ENCODE measurements at regions of chr6 and their contacts with region 1.

Region 1: GRCh38 chr6:1609648-1610496 is at the start of gene FOXC1:
- DNase-seq: peak; percentile 81 to 96
- H3K4me3 ChIP-seq: peak within 1 kb of the TSS; percentile 89
- H3K27ac ChIP-seq: peak within 1 kb of the TSS; percentile 54
- H3K4me1 ChIP-seq: no peaks in the 10 kb centered on the region; the same call in 1 of the 2 replicates
- H3K27me3 ChIP-seq: no peaks in the 10 kb centered on the region
- CTCF ChIP-seq: no peak
- total RNA-seq, gene FOXC1: 16.2 and 18.6 TPM in 2 replicates

Region 2: DNA sequence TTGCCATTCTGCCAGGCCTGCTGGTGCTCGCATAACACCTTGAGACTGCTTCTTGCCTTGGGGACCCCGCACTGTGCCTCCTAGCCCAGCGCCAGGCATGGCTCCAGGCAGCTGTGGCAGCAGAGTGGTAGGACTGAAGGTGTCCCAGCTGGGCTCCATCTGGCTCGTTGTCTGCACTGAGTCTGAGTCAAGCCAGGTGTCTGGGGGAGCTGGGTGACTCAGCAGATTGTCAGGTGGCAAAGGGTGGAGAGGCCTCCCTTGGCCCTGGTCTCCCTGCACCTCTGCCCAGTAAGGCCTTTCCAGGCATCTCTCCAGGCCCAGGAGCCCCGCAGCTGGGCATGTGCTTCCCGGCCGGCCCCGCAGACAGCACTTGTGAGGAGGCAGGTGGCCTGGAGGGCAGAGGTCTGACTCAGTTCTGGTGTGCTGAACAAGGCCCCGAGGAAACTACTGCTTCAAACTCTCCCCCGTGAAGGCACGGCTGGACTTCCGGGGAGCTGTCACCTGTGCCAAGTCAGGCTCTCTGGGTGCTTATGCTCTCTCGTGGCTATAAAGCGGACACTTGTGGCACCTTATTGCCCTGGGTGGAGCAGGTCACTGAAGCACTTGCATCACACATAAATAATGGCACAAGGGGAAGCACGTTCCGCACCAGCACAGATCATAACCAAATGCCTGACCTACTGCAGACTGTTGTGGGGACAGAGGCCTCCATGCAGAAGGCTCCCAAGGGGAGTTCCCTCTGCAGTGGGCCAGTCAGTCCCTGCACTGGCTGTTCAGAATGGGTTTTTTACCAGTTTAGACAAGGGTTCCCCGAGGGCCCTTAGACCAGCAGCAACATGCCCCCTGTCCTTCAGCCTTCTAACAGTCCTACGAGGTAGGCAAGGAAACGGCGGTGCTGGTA is 27.3 kb after region 1 on chr6:
- CTCF ChIA-PET with region 1: no interaction called
- POLR2A ChIA-PET with region 1: no interaction called
- intact Hi-C with region 1: loop called (anchors 2 kb)
- DNase-seq: peak; percentile 89 to 90
- H3K4me3 ChIP-seq: no peak overlapping the region
- H3K27ac ChIP-seq: peak overlapping the region; percentile 76
- H3K4me1 ChIP-seq: peaks cover 55% of the 10 kb centered on the region
- H3K27me3 ChIP-seq: no peaks in the 10 kb centered on the region
- CTCF ChIP-seq: no peak

Region 3: GRCh38 chr6:1670702-1671462 is 61.0 kb after region 1 on chr6:
- CTCF ChIA-PET with region 1: no interaction called
- POLR2A ChIA-PET with region 1: no interaction called
- intact Hi-C with region 1: loop called (anchors 2 kb)
- DNase-seq: peak; percentile 69 to 88
- H3K4me3 ChIP-seq: no peak overlapping the region
- H3K27ac ChIP-seq: peak overlapping the region; percentile 73
- H3K4me1 ChIP-seq: peaks cover 16% of the 10 kb centered on the region
- H3K27me3 ChIP-seq: no peaks in the 10 kb centered on the region
- CTCF ChIP-seq: no peak

Region 4: GRCh38 chr6:1761477-1761877 is 151.6 kb after region 1 on chr6:
- CTCF ChIA-PET with region 1: no interaction called
- POLR2A ChIA-PET with region 1: interaction called, 10 read pairs
- intact Hi-C with region 1: loop called (anchors 5 kb)
- DNase-seq: no peak
- H3K4me3 ChIP-seq: no peak overlapping the region
- H3K27ac ChIP-seq: no peak overlapping the region
- H3K4me1 ChIP-seq: peaks cover 26% of the 10 kb centered on the region
- H3K27me3 ChIP-seq: no peaks in the 10 kb centered on the region
- CTCF ChIP-seq: no peak

Region 5: GRCh38 chr6:1767481-1768251 is 157.8 kb after region 1 on chr6:
- CTCF ChIA-PET with region 1: interaction called, 5 read pairs
- POLR2A ChIA-PET with region 1: interaction called, 4 read pairs
- intact Hi-C with region 1: loop called (anchors 5 kb)
- DNase-seq: peak; percentile 47 to 81
- H3K4me3 ChIP-seq: peak overlapping the region; percentile 43
- H3K27ac ChIP-seq: peak overlapping the region; percentile 94
- H3K4me1 ChIP-seq: peaks cover 50% of the 10 kb centered on the region
- H3K27me3 ChIP-seq: no peaks in the 10 kb centered on the region
- CTCF ChIP-seq: no peak

Region 6: DNA sequence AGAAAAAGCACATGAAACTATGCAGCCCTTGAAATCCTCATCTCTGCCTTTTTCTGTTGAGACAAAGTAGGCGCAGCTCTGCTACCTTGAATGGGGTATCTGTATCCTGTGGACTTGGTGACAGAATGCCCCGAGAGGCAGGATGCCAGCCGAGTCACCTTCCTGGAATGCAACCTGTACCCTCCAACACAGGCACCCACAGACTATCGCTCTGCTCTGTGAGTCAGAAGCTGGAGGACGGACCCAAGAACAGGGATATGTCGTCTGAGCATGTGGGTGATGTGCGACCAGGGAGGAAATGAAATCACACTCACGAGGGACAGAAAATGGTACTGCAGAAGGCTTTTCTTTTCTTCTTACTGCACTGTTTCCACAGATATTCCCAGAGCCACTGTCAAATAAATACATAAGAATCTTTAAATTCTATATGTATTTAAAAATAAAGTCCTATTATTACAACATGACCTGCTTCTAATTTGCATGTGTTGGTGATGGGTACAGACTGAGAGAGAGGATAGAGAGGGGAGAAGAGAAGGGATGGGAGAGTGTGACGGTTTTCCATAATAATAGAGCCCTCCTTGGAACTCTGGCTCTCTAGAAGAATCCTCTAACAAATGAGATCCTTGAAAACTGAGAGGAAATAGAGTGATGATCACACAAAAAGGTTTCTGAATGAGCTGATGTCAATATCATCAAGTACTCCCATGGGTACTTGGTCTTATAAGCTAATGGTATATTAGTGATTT is 307.9 kb after region 1 on chr6:
- CTCF ChIA-PET with region 1: no interaction called
- POLR2A ChIA-PET with region 1: no interaction called
- intact Hi-C with region 1: loop called (anchors 2 kb)
- DNase-seq: peak; percentile 91 to 94
- H3K4me3 ChIP-seq: no peak overlapping the region
- H3K27ac ChIP-seq: peak overlapping the region; percentile 89
- H3K4me1 ChIP-seq: peaks cover 30% of the 10 kb centered on the region
- H3K27me3 ChIP-seq: no peaks in the 10 kb centered on the region
- CTCF ChIP-seq: no peak

Region 7: GRCh38 chr6:2021713-2022125 is 411.8 kb after region 1 on chr6:
- CTCF ChIA-PET with region 1: no interaction called
- POLR2A ChIA-PET with region 1: no interaction called
- intact Hi-C with region 1: loop called (anchors 10 kb)
- DNase-seq: peak in 1 of 2 experiments; percentile 62
- H3K4me3 ChIP-seq: no peak overlapping the region
- H3K27ac ChIP-seq: no peak overlapping the region
- H3K4me1 ChIP-seq: peaks cover 12% of the 10 kb centered on the region
- H3K27me3 ChIP-seq: no peaks in the 10 kb centered on the region
- CTCF ChIP-seq: no peak

Measured in PC-9 (cell line).